ENCODE measurements at regions of chr19 and their contacts with region 1.

Region 1: DNA sequence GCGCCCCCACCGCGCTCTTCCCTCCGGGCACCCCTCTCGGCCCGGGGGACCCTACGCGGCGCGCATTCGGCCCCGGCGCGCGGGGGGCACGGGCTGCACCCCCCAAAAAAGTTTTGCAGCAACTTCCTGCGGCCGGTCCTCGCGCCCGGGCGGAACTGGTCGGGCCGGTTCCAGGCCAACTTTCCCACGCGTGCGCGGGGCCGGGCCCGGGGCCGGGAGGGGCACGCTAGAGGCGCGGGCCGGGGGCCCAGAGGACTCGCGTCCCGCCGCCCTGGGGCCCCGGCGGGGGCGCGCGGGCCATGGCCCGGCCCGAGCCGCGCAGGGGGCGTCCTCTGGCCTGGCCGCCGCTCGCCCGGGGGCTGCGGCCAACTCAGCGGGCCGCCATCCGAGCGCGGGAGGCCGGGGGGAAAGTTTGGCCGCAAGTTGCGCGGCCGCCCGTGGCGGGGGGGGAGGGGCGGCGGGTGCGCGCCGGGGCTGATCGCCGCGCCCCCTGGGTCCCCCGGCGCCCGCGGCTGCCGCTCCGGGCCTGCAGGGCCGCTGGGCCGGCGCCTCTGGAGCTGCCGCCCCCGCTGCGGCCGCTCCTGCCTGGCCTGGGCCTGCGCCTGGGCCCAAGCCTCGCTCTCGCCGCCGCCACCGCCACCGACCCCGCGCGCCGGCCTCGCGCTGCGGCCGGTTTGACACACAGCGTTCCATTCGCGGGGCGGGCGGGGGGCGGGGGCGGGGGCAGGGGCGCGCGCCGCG is at the start of gene NR2F6:
- DNase-seq: peak; percentile 78
- ATAC-seq: peak; percentile 28
- H3K4me3 ChIP-seq: peak within 1 kb of the TSS; percentile 9 to 76 (median 65)
- H3K4me3 Mint-ChIP-seq: peak within 1 kb of the TSS; percentile 95
- H3K27ac ChIP-seq: peak within 1 kb of the TSS in 1 of 2 donors; percentile 38
- H3K27ac Mint-ChIP-seq: peak within 1 kb of the TSS; percentile 95
- H3K4me1 ChIP-seq: peaks cover 5 to 29% of the 10 kb centered on the region in 2 donors
- H3K4me1 Mint-ChIP-seq: peaks cover 25% of the 10 kb centered on the region
- H3K27me3 ChIP-seq: no peaks in the 10 kb centered on the region
- H3K27me3 Mint-ChIP-seq: no peaks in the 10 kb centered on the region
- CTCF ChIP-seq: no peak
- total RNA-seq, gene NR2F6: 4.9 and 5.1 TPM in 2 replicates

Region 2: GRCh38 chr19:16452347-16452878 is 793.0 kb before region 1 on chr19:
- CTCF ChIA-PET with region 1: no interaction called
- POLR2A ChIA-PET with region 1: interaction called, 12 read pairs
- intact Hi-C with region 1: no loop called
- DNase-seq: no peak
- ATAC-seq: no peak
- H3K4me3 ChIP-seq: no peak overlapping the region
- H3K4me3 Mint-ChIP-seq: no peak overlapping the region
- H3K27ac ChIP-seq: no peak overlapping the region
- H3K27ac Mint-ChIP-seq: no peak overlapping the region
- H3K4me1 ChIP-seq: peaks cover 46 to 49% of the 10 kb centered on the region in 2 donors
- H3K4me1 Mint-ChIP-seq: peaks cover 58% of the 10 kb centered on the region
- H3K27me3 ChIP-seq: no peaks in the 10 kb centered on the region
- H3K27me3 Mint-ChIP-seq: no peaks in the 10 kb centered on the region
- CTCF ChIP-seq: no peak

Region 3: DNA sequence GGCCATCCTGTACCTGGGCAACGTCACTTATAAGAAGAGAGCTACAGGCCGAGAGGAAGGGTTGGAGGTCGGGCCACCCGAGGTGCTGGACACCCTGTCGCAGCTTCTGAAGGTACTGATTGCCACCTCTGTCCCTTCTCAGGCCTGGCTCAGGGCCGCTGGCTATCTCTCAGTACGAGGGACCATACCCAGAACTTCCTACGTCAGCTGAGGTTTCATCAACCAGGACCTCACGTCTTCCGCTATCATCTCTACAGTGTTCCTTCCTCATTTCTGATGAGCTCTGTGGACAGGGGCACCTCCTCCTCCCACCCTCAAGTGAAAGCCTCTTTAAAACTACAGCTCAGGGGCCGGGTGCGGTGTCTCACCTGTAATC is 88.5 kb before region 1 on chr19:
- CTCF ChIA-PET with region 1: no interaction called
- POLR2A ChIA-PET with region 1: no interaction called
- intact Hi-C with region 1: no loop called
- DNase-seq: peak; percentile 35
- ATAC-seq: peak; percentile 31
- H3K4me3 ChIP-seq: no peak overlapping the region
- H3K4me3 Mint-ChIP-seq: no peak overlapping the region
- H3K27ac ChIP-seq: no peak overlapping the region
- H3K27ac Mint-ChIP-seq: no peak overlapping the region
- H3K4me1 ChIP-seq: no peaks in the 10 kb centered on the region
- H3K4me1 Mint-ChIP-seq: no peaks in the 10 kb centered on the region
- H3K27me3 ChIP-seq: no peaks in the 10 kb centered on the region
- H3K27me3 Mint-ChIP-seq: no peaks in the 10 kb centered on the region
- CTCF ChIP-seq: no peak

Region 4: DNA sequence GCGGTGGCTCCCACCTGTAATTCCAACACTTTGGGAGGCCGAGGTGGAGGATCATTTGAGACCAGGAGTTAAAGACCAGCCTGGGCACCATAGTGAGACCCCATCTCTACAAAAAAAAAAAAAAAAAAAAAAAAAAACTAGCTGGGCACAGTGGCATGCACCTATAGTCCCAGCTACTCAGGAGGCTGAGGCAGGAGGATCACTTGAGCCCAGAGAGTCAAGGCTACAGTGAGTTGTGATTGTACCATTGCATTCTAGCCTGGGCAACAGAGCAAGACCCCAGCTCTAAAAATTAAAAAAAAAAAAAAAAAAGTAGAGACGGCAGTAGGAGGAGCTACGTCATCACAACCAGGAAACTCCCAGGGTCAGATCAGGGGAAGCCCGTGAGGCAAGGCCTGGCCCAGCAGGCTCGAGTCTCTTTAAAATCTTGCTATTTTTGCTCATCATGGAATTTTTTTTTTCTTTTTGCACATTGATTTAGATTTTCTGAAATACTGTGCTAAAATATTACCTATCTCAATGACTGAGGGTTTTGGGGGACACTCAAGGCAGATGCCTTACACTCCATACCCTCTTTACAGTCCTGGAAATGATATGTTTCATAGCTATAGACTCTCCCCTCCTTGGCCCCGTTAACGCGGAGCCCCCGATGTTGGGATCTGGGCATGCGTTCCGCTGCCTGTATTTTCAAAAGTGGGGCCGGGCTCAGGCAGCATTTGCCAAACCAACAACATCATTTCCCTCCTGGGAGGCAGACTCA is 74.7 kb before region 1 on chr19:
- CTCF ChIA-PET with region 1: no interaction called
- POLR2A ChIA-PET with region 1: no interaction called
- intact Hi-C with region 1: no loop called
- DNase-seq: peak; percentile 55
- ATAC-seq: peak; percentile 43
- H3K4me3 ChIP-seq: no peak overlapping the region
- H3K4me3 Mint-ChIP-seq: no peak overlapping the region
- H3K27ac ChIP-seq: peak overlapping the region in 1 of 2 donors; percentile 50
- H3K27ac Mint-ChIP-seq: peak overlapping the region; percentile 63
- H3K4me1 ChIP-seq: no peaks in the 10 kb centered on the region
- H3K4me1 Mint-ChIP-seq: peaks cover 6% of the 10 kb centered on the region
- H3K27me3 ChIP-seq: no peaks in the 10 kb centered on the region
- H3K27me3 Mint-ChIP-seq: no peaks in the 10 kb centered on the region
- CTCF ChIP-seq: no peak

Region 5: GRCh38 chr19:17260842-17261325 is 15.5 kb after region 1 on chr19:
- CTCF ChIA-PET with region 1: interaction called, 7 read pairs
- POLR2A ChIA-PET with region 1: interaction called, 6 read pairs
- intact Hi-C with region 1: loop called (anchors 1 kb)
- DNase-seq: peak; percentile 89
- ATAC-seq: peak; percentile 99
- H3K4me3 ChIP-seq: no peak overlapping the region
- H3K4me3 Mint-ChIP-seq: no peak overlapping the region
- H3K27ac ChIP-seq: no peak overlapping the region
- H3K27ac Mint-ChIP-seq: no peak overlapping the region
- H3K4me1 ChIP-seq: peaks cover 0 to 10% of the 10 kb centered on the region in 2 donors
- H3K4me1 Mint-ChIP-seq: peaks cover 10% of the 10 kb centered on the region
- H3K27me3 ChIP-seq: no peaks in the 10 kb centered on the region
- H3K27me3 Mint-ChIP-seq: no peaks in the 10 kb centered on the region
- CTCF ChIP-seq: peak; percentile 91

Region 6: GRCh38 chr19:17889609-17890214 is 644.3 kb after region 1 on chr19:
- CTCF ChIA-PET with region 1: no interaction called
- POLR2A ChIA-PET with region 1: no interaction called
- intact Hi-C with region 1: no loop called
- DNase-seq: no peak
- ATAC-seq: no peak
- H3K4me3 ChIP-seq: no peak overlapping the region
- H3K4me3 Mint-ChIP-seq: no peak overlapping the region
- H3K27ac ChIP-seq: no peak overlapping the region
- H3K27ac Mint-ChIP-seq: peak overlapping the region; percentile 10
- H3K4me1 ChIP-seq: peaks cover 22% of the 10 kb centered on the region in 2 donors
- H3K4me1 Mint-ChIP-seq: peaks cover 15% of the 10 kb centered on the region
- H3K27me3 ChIP-seq: no peaks in the 10 kb centered on the region
- H3K27me3 Mint-ChIP-seq: peaks cover 4% of the 10 kb centered on the region
- CTCF ChIP-seq: no peak

Measured in B cell (primary cell).